Cardiac septum (tissue), 1 donor: ENCODE measurements at regions of chr4 and their contacts with region 1.

Region 1: GRCh38 chr4:1746265-1746691 is 25.0 kb downstream of the TACC3 start:
- DNase-seq: peak; percentile 83

Region 2: GRCh38 chr4:1809754-1810511 is 63.7 kb after region 1 on chr4:
- intact Hi-C with region 1: loop called (anchors 1 kb)
- DNase-seq: no peak

Region 3: DNA sequence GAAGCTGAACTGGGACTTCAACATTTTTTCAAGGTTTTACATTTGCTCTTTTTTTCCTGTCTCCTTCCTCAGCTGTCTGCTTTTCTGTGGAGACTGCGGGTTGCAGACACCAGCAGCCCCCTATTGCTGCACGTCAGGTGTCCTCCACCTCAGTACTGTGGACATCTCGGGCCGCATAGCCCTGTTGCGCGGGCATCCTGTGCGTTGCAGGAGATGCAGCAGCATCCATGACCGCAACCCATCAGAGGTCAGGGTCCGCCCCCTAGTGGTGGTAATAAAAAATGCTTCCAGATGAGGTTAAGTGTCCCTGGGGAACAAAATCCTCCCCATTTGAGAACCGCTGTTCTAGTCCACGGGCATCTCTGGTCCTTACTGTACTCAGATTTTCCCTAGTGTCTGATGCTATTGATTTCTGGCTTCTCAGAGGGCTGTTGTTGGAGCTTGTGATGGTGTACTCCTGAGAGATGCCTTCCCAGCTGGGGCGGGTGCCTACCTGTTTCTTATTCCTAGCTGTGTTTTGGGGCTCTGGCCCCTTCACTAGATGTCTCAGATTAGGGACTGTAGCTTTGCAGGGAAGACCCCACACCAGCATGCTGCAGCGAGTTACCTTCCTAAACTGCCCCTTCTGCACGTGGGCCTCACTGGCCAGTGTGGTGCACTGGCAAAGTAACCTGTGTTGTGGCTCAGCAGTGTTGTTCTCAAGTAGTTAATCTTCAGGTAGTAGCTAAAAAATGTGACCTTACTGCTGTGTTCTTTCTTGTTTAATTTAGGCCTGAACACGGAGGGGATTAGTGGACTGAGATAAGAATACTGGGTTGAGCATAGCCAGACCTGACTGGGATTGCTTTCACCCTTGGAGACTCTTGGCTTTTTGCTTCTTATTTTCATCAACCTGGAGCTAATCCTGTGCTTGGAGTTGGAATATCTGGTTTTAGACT is 153.1 kb after region 1 on chr4:
- intact Hi-C with region 1: loop called (anchors 2 kb)
- DNase-seq: peak; percentile 89